ENCODE measurements at regions of chr6 and their contacts with region 1.

Region 1: GRCh38 chr6:34757687-34758274 is 476 bp downstream of the SNRPC start:
- DNase-seq: no peak
- ATAC-seq: no peak
- H3K4me3 ChIP-seq: peak overlapping the region; percentile 74 to 94 (median 94)
- H3K27ac ChIP-seq: peak overlapping the region; percentile 88
- H3K4me1 ChIP-seq: peaks cover 24% of the 10 kb centered on the region
- H3K27me3 ChIP-seq: peaks cover 0 to 3% of the 10 kb centered on the region in 2 experiments; a peak in 1 of 5 replicates
- CTCF ChIP-seq: no peak
- EP300 ChIP-seq: no peak
- POLR2A ChIP-seq: no peak
- RAD21 ChIP-seq: no peak

Region 2: GRCh38 chr6:34161857-34162515 is 595.8 kb before region 1 on chr6:
- CTCF ChIA-PET with region 1: no interaction called
- POLR2A ChIA-PET with region 1: no interaction called
- in situ Hi-C with region 1: no loop called
- intact Hi-C with region 1: no loop called
- DNase-seq: no peak
- ATAC-seq: no peak
- H3K4me3 ChIP-seq: no peak overlapping the region
- H3K27ac ChIP-seq: no peak overlapping the region
- H3K4me1 ChIP-seq: peaks cover 8% of the 10 kb centered on the region; the same call in 1 of the 2 replicates
- H3K27me3 ChIP-seq: peaks cover 0 to 17% of the 10 kb centered on the region in 2 experiments; a peak in 3 of 5 replicates
- CTCF ChIP-seq: no peak
- EP300 ChIP-seq: no peak
- POLR2A ChIP-seq: no peak
- RAD21 ChIP-seq: no peak

Region 3: GRCh38 chr6:34656378-34657036 is 101.3 kb before region 1 on chr6:
- CTCF ChIA-PET with region 1: no interaction called
- POLR2A ChIA-PET with region 1: interaction called, 24 read pairs
- in situ Hi-C with region 1: no loop called
- intact Hi-C with region 1: loop called (anchors 1 kb)
- DNase-seq: peak; percentile 76
- ATAC-seq: peak; percentile 79
- H3K4me3 ChIP-seq: peak overlapping the region; percentile 62 to 71 (median 66); a peak in 5 of 6 replicates
- H3K27ac ChIP-seq: peak overlapping the region; percentile 91
- H3K4me1 ChIP-seq: peaks cover 70% of the 10 kb centered on the region
- H3K27me3 ChIP-seq: no peaks in the 10 kb centered on the region
- CTCF ChIP-seq: no peak
- EP300 ChIP-seq: peak in 1 of 2 experiments; percentile 14; a peak in 1 of 4 replicates
- POLR2A ChIP-seq: no peak
- RAD21 ChIP-seq: no peak

Region 4: GRCh38 chr6:34671801-34672656 is 85.8 kb before region 1 on chr6:
- CTCF ChIA-PET with region 1: no interaction called
- POLR2A ChIA-PET with region 1: interaction called, 17 read pairs
- in situ Hi-C with region 1: no loop called
- intact Hi-C with region 1: loop called (anchors 5 kb)
- DNase-seq: no peak
- ATAC-seq: no peak
- H3K4me3 ChIP-seq: no peak overlapping the region; a peak in 1 of 6 replicates
- H3K27ac ChIP-seq: peak overlapping the region; percentile 73
- H3K4me1 ChIP-seq: peaks cover 95% of the 10 kb centered on the region
- H3K27me3 ChIP-seq: no peaks in the 10 kb centered on the region
- CTCF ChIP-seq: no peak
- EP300 ChIP-seq: no peak
- POLR2A ChIP-seq: no peak
- RAD21 ChIP-seq: no peak

Region 5: GRCh38 chr6:34696739-34697543 is 60.8 kb before region 1 on chr6 and contains the start of gene ILRUN:
- CTCF ChIA-PET with region 1: no interaction called
- POLR2A ChIA-PET with region 1: interaction called, 20 read pairs
- in situ Hi-C with region 1: no loop called
- intact Hi-C with region 1: loop called (anchors 2 kb)
- DNase-seq: peak; percentile 86
- ATAC-seq: peak; percentile 84
- H3K4me3 ChIP-seq: peak within 1 kb of the TSS; percentile 91 to 99 (median 98)
- H3K27ac ChIP-seq: peak within 1 kb of the TSS; percentile 82
- H3K4me1 ChIP-seq: peaks cover 52% of the 10 kb centered on the region
- H3K27me3 ChIP-seq: no peaks in the 10 kb centered on the region; a peak in 1 of 5 replicates
- CTCF ChIP-seq: 0 out of 2 replicates have a peak, but pooled peaks have one; percentile 11
- EP300 ChIP-seq: 0 out of 4 replicates have a peak, but pooled peaks of 1 of the 2 experiments have one; percentile 29
- POLR2A ChIP-seq: peak in 1 of 2 experiments; percentile 80; a peak in 2 of 4 replicates
- RAD21 ChIP-seq: no peak
- total RNA-seq, gene ILRUN: 66.6 and 90.8 TPM in 2 replicates

Region 6: GRCh38 chr6:34745277-34746103 is 12.3 kb before region 1 on chr6:
- CTCF ChIA-PET with region 1: no interaction called
- POLR2A ChIA-PET with region 1: interaction called, 53 read pairs
- in situ Hi-C with region 1: no loop called
- intact Hi-C with region 1: no loop called
- DNase-seq: peak; percentile 72
- ATAC-seq: peak; percentile 85
- H3K4me3 ChIP-seq: peak overlapping the region; percentile 41 to 56 (median 47)
- H3K27ac ChIP-seq: peak overlapping the region; percentile 57
- H3K4me1 ChIP-seq: peaks cover 82% of the 10 kb centered on the region
- H3K27me3 ChIP-seq: no peaks in the 10 kb centered on the region
- CTCF ChIP-seq: no peak
- EP300 ChIP-seq: peak in 1 of 2 experiments; percentile 22; a peak in 1 of 4 replicates
- POLR2A ChIP-seq: no peak
- RAD21 ChIP-seq: no peak

Region 7: DNA sequence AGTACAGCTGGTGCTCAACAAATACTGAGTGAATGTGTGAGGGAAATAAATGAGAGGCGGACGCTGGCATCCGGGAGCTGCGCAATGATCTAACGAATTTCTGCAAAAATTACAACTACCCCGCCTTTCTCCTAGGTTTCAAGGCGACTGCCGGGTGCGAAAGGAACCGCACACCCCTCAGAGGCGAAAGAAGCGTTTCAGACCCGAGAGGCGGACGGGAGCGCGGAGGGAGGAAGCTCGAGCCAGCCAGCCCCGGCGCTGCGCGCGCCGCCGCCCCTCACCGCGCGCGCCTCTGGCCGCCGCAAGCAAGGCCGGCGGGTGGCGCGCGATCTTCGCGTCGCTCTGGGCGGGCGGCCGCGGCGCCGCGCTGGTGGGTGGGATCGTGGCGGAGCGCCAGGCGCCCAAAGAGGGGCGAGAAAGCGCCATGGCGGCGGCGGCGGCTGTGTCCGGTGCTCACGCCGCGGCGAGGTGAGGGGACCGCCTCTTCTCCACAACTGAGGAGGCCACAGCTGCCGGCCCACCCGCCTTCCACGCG is 34.0 kb after region 1 on chr6 and contains the start of gene BLTP3A:
- CTCF ChIA-PET with region 1: no interaction called
- POLR2A ChIA-PET with region 1: interaction called, 38 read pairs
- in situ Hi-C with region 1: no loop called
- intact Hi-C with region 1: loop called (anchors 5 kb)
- DNase-seq: peak; percentile 59
- ATAC-seq: peak; percentile 90
- H3K4me3 ChIP-seq: peak within 1 kb of the TSS; percentile 88 to 100 (median 95)
- H3K27ac ChIP-seq: peak within 1 kb of the TSS; percentile 96
- H3K4me1 ChIP-seq: peaks cover 59% of the 10 kb centered on the region
- H3K27me3 ChIP-seq: no peaks in the 10 kb centered on the region; a peak in 1 of 5 replicates
- CTCF ChIP-seq: no peak; the same call in 1 of the 2 replicates
- EP300 ChIP-seq: no peak
- POLR2A ChIP-seq: peak; percentile 76 to 89
- RAD21 ChIP-seq: peak; percentile 57; the same call in 1 of the 2 replicates
- total RNA-seq, gene BLTP3A: 24.0 and 39.3 TPM in 2 replicates

Region 8: GRCh38 chr6:34887753-34888513 is 130.2 kb after region 1 on chr6 and contains the start of gene TAF11:
- CTCF ChIA-PET with region 1: no interaction called
- POLR2A ChIA-PET with region 1: interaction called, 19 read pairs
- in situ Hi-C with region 1: no loop called
- intact Hi-C with region 1: no loop called
- DNase-seq: peak; percentile 96
- ATAC-seq: peak; percentile 91
- H3K4me3 ChIP-seq: peak within 1 kb of the TSS; percentile 92 to 97 (median 94)
- H3K27ac ChIP-seq: peak within 1 kb of the TSS; percentile 84
- H3K4me1 ChIP-seq: peaks cover 50% of the 10 kb centered on the region
- H3K27me3 ChIP-seq: no peaks in the 10 kb centered on the region; a peak in 1 of 5 replicates
- CTCF ChIP-seq: peak; percentile 20; the same call in 1 of the 2 replicates
- EP300 ChIP-seq: 0 out of 4 replicates have a peak, but pooled peaks of 1 of the 2 experiments have one; percentile 14
- POLR2A ChIP-seq: peak; percentile 89 to 96
- RAD21 ChIP-seq: peak; percentile 40; the same call in 1 of the 2 replicates
- total RNA-seq, gene TAF11: 73.6 and 94.9 TPM in 2 replicates